ENCODE measurements at regions of chr1 and their contacts with region 1.

Region 1: GRCh38 chr1:46699666-46700065 is 19.2 kb downstream of the EFCAB14 start:
- DNase-seq: no peak
- CTCF ChIP-seq: no peak

Region 2: GRCh38 chr1:46675549-46676314 is 23.9 kb before region 1 on chr1:
- CTCF ChIA-PET with region 1: interaction called, 10 read pairs
- POLR2A ChIA-PET with region 1: no interaction called
- DNase-seq: peak; percentile 38
- CTCF ChIP-seq: no peak

Region 3: GRCh38 chr1:46903481-46903880 is 203.8 kb after region 1 on chr1:
- CTCF ChIA-PET with region 1: no interaction called
- POLR2A ChIA-PET with region 1: no interaction called
- DNase-seq: no peak
- CTCF ChIP-seq: no peak

Measured in GM10248 (cell line).